ENCODE measurements at regions of chr22 and their contacts with region 1.

Region 1: GRCh38 chr22:46737976-46738646 is at the start of gene CERK:
- DNase-seq: peak; percentile 46 to 79 (median 57)
- ATAC-seq: peak; percentile 72
- H3K4me3 ChIP-seq: peak within 1 kb of the TSS; percentile 82
- H3K4me3 Mint-ChIP-seq: peak within 1 kb of the TSS; percentile 97 to 100 (median 99)
- H3K27ac ChIP-seq: peak within 1 kb of the TSS; percentile 86
- H3K27ac Mint-ChIP-seq: peak within 1 kb of the TSS; percentile 93 to 100 (median 98)
- H3K4me1 ChIP-seq: peaks cover 38 to 41% of the 10 kb centered on the region in 2 donors
- H3K4me1 Mint-ChIP-seq: peaks cover 34 to 52% (median 41%) of the 10 kb centered on the region in 7 donors
- H3K27me3 ChIP-seq: no peaks in the 10 kb centered on the region
- H3K27me3 Mint-ChIP-seq: no peaks in the 10 kb centered on the region
- total RNA-seq, gene CERK: 55.8 to 138 (median 72.4) TPM

Region 2: GRCh38 chr22:45671768-45672563 is 1066.1 kb before region 1 on chr22 and contains the start of gene ATXN10:
- CTCF ChIA-PET with region 1: no interaction called
- POLR2A ChIA-PET with region 1: no interaction called
- intact Hi-C with region 1: loop called in 1 of 2 experiments (anchors 10 kb)
- DNase-seq: peak; percentile 55 to 79 (median 74)
- ATAC-seq: peak; percentile 90
- H3K4me3 ChIP-seq: peak within 1 kb of the TSS; percentile 49
- H3K4me3 Mint-ChIP-seq: peak within 1 kb of the TSS; percentile 86 to 95 (median 90)
- H3K27ac ChIP-seq: peak within 1 kb of the TSS; percentile 75
- H3K27ac Mint-ChIP-seq: peak within 1 kb of the TSS; percentile 38 to 92 (median 88)
- H3K4me1 ChIP-seq: peaks cover 13 to 25% of the 10 kb centered on the region in 2 donors
- H3K4me1 Mint-ChIP-seq: peaks cover 23 to 43% (median 41%) of the 10 kb centered on the region in 7 donors
- H3K27me3 ChIP-seq: no peaks in the 10 kb centered on the region
- H3K27me3 Mint-ChIP-seq: peaks cover 4 to 10% (median 6%) of the 10 kb centered on the region in 5 donors
- total RNA-seq, gene ATXN10: 64.2 to 85.7 (median 73.1) TPM

Region 3: GRCh38 chr22:46576556-46577367 is 161.3 kb before region 1 on chr22:
- CTCF ChIA-PET with region 1: no interaction called
- POLR2A ChIA-PET with region 1: no interaction called
- intact Hi-C with region 1: loop called in 1 of 2 experiments (anchors 5 kb)
- DNase-seq: peak; percentile 44 to 82 (median 65)
- ATAC-seq: peak; percentile 89
- H3K4me3 ChIP-seq: peak overlapping the region; percentile 66
- H3K4me3 Mint-ChIP-seq: peak overlapping the region; percentile 72 to 91 (median 84)
- H3K27ac ChIP-seq: peak overlapping the region; percentile 37
- H3K27ac Mint-ChIP-seq: peak overlapping the region in 7 of 9 donors; percentile 70 to 84 (median 77)
- H3K4me1 ChIP-seq: peaks cover 16 to 25% of the 10 kb centered on the region in 2 donors
- H3K4me1 Mint-ChIP-seq: peaks cover 36 to 51% (median 47%) of the 10 kb centered on the region in 7 donors
- H3K27me3 ChIP-seq: no peaks in the 10 kb centered on the region
- H3K27me3 Mint-ChIP-seq: no peaks in the 10 kb centered on the region

Region 4: DNA sequence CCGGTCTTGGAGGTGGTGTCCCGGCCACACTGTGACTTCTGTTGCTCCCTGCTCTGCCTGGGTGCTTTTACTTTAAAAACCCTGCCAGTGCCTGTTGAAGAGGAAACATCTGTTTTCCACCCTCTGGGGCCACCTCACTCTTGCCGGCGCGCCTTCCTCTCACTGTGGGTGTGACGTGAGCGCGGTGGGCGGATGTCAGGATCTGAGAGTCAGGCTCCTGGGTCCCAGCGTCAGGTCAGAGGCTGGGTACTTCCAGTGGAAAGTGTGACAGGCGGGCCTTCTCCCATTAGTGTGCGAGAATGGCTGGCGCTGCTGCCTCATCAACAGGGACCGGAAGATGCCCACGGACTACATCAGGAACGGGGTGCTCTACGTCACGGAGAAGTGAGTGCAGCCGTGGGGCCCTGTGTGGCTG is 63.7 kb before region 1 on chr22:
- CTCF ChIA-PET with region 1: no interaction called
- POLR2A ChIA-PET with region 1: interaction called, 3 read pairs
- intact Hi-C with region 1: loop called (anchors 2 kb)
- DNase-seq: peak; percentile 57 to 96 (median 85)
- ATAC-seq: peak; percentile 89
- H3K4me3 ChIP-seq: peak overlapping the region; percentile 73
- H3K4me3 Mint-ChIP-seq: peak overlapping the region; percentile 88 to 98 (median 92)
- H3K27ac ChIP-seq: peak overlapping the region; percentile 71
- H3K27ac Mint-ChIP-seq: peak overlapping the region; percentile 92 to 99 (median 94)
- H3K4me1 ChIP-seq: peaks cover 12 to 32% of the 10 kb centered on the region in 2 donors
- H3K4me1 Mint-ChIP-seq: peaks cover 24 to 36% (median 30%) of the 10 kb centered on the region in 7 donors
- H3K27me3 ChIP-seq: no peaks in the 10 kb centered on the region
- H3K27me3 Mint-ChIP-seq: no peaks in the 10 kb centered on the region

Region 5: GRCh38 chr22:46762238-46763050 is 24.3 kb after region 1 on chr22 and contains the start of gene TBC1D22A:
- CTCF ChIA-PET with region 1: interaction called, 24 read pairs
- POLR2A ChIA-PET with region 1: interaction called, 255 read pairs
- intact Hi-C with region 1: loop called (anchors 1 kb)
- DNase-seq: peak; percentile 89 to 95 (median 93)
- ATAC-seq: peak; percentile 93
- H3K4me3 ChIP-seq: peak within 1 kb of the TSS; percentile 99
- H3K4me3 Mint-ChIP-seq: peak within 1 kb of the TSS; percentile 97 to 100 (median 99)
- H3K27ac ChIP-seq: peak within 1 kb of the TSS; percentile 99
- H3K27ac Mint-ChIP-seq: peak within 1 kb of the TSS; percentile 97 to 100 (median 100)
- H3K4me1 ChIP-seq: peaks cover 28 to 31% of the 10 kb centered on the region in 2 donors
- H3K4me1 Mint-ChIP-seq: peaks cover 46 to 74% (median 63%) of the 10 kb centered on the region in 7 donors
- H3K27me3 ChIP-seq: no peaks in the 10 kb centered on the region
- H3K27me3 Mint-ChIP-seq: no peaks in the 10 kb centered on the region
- total RNA-seq, gene TBC1D22A: 37.5 to 50.1 (median 43.4) TPM

Region 6: DNA sequence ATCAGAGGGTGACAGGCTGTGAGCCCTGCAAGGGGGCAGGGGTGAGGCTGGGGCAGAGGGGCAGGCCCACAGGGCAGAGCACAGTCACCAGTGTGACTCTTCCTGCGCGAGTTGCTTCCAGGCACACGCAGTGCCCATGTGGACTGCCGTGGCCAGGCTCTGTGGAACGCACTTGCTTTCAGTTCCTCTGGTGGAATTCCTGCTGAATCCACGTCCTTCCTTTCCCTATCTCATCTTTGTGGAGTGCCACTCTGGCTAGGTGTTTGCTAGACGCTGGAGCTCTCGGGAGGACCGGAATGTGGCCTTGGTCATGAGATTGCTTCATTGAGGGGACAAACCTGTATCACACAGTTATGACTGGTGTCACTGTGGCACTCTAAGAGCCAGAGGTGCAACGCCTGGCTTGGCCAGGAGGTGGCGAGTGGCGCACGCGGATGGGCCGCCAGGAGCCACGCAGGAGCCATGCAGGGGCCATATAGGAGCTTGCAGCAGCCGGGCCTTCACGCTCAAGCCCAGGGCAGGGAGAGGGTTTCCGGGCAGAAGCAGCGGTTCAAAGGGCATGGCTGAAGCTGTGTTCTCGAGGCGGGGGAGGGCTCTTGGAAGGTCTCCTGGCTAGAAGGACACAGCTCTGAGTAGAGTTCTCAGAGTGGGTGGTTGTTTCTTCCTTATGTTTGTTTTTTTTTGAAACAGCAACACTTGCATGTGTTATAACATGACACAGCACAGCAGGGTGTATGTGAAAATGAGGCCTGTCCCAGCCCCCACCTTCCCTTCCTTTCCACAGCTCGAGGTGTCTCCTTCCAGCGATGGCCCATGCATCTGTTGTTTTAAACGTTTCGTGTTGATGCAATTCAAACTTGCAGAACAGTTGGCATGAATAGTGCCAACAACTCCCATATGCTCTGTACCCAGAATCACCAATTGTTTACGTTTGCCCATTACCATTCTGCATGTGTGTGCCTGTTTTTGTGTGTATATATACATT is 60.5 kb after region 1 on chr22:
- CTCF ChIA-PET with region 1: interaction called, 29 read pairs
- POLR2A ChIA-PET with region 1: interaction called, 11 read pairs
- intact Hi-C with region 1: loop called (anchors 1 kb)
- DNase-seq: peak; percentile 37 to 78 (median 59)
- ATAC-seq: peak; percentile 84
- H3K4me3 ChIP-seq: no peak overlapping the region
- H3K4me3 Mint-ChIP-seq: peak overlapping the region in 2 of 10 donors; percentile 13 to 34
- H3K27ac ChIP-seq: no peak overlapping the region
- H3K27ac Mint-ChIP-seq: peak overlapping the region; percentile 49 to 91 (median 80)
- H3K4me1 ChIP-seq: peaks cover 7 to 8% of the 10 kb centered on the region in 2 donors
- H3K4me1 Mint-ChIP-seq: peaks cover 11 to 36% (median 20%) of the 10 kb centered on the region in 7 donors
- H3K27me3 ChIP-seq: no peaks in the 10 kb centered on the region
- H3K27me3 Mint-ChIP-seq: no peaks in the 10 kb centered on the region

Region 7: GRCh38 chr22:46829941-46830715 is 92.0 kb after region 1 on chr22:
- CTCF ChIA-PET with region 1: no interaction called
- POLR2A ChIA-PET with region 1: no interaction called
- intact Hi-C with region 1: no loop called
- DNase-seq: no peak
- ATAC-seq: no peak
- H3K4me3 ChIP-seq: no peak overlapping the region
- H3K4me3 Mint-ChIP-seq: no peak overlapping the region
- H3K27ac ChIP-seq: no peak overlapping the region
- H3K27ac Mint-ChIP-seq: no peak overlapping the region
- H3K4me1 ChIP-seq: no peaks in the 10 kb centered on the region
- H3K4me1 Mint-ChIP-seq: peaks cover 3 to 40% (median 25%) of the 10 kb centered on the region in 7 donors
- H3K27me3 ChIP-seq: no peaks in the 10 kb centered on the region
- H3K27me3 Mint-ChIP-seq: no peaks in the 10 kb centered on the region